Heart right ventricle (tissue), 16 donors: ENCODE measurements at regions of chr14 and their contacts with region 1.

Region 1: GRCh38 chr14:88380405-88380804 is 5.1 kb upstream of the SPATA7 start:
- DNase-seq: no peak
- ATAC-seq: no peak
- H3K4me3 ChIP-seq: no peak overlapping the region
- H3K27ac ChIP-seq: no peak overlapping the region
- H3K4me1 ChIP-seq: peaks cover 0 to 7% (median 0%) of the 10 kb centered on the region in 9 donors
- H3K27me3 ChIP-seq: no peaks in the 10 kb centered on the region
- CTCF ChIP-seq: peak in 4 of 9 donors; percentile 14 to 48 (median 32)

Region 2: DNA sequence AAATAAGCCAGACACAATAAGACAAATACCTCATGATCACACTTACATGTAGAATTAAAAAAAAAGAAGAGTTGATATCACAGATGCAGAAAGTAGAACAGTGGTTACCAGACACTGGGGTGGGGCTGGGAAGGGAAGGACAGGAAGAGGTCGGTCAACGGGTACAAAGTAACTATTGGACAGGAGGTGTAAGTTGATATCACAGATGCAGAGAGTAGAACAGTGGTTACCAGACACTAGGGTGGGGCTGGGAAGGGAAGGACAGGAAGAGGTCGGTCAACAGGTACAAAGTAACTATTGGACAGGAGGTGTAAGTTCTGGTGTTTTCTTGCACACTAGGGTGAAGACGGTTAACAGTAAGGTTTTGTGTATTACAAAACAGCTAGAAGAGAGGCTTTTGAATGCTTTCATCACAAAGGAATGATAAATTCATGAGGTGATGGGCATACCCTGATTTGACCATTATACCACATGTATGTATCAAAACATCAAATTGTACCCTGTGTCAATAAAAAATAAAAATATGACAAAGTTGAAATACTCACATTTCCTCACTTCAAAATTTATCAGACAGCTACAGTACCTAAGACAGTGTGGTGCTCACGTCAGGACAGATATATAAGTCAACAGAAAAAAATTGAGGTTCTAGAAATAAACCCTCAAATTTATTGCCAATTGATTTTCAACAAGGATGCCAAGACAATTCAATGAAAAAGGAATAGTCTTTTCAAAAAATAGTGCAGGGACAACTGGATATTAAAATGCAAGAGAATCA is 420.2 kb before region 1 on chr14:
- intact Hi-C with region 1: no loop called
- DNase-seq: no peak
- ATAC-seq: peak in 2 of 8 donors; percentile 16 to 22
- H3K4me3 ChIP-seq: no peak overlapping the region
- H3K27ac ChIP-seq: no peak overlapping the region
- H3K4me1 ChIP-seq: peaks cover 0 to 8% (median 0%) of the 10 kb centered on the region in 9 donors
- H3K27me3 ChIP-seq: no peaks in the 10 kb centered on the region
- CTCF ChIP-seq: no peak

Region 3: DNA sequence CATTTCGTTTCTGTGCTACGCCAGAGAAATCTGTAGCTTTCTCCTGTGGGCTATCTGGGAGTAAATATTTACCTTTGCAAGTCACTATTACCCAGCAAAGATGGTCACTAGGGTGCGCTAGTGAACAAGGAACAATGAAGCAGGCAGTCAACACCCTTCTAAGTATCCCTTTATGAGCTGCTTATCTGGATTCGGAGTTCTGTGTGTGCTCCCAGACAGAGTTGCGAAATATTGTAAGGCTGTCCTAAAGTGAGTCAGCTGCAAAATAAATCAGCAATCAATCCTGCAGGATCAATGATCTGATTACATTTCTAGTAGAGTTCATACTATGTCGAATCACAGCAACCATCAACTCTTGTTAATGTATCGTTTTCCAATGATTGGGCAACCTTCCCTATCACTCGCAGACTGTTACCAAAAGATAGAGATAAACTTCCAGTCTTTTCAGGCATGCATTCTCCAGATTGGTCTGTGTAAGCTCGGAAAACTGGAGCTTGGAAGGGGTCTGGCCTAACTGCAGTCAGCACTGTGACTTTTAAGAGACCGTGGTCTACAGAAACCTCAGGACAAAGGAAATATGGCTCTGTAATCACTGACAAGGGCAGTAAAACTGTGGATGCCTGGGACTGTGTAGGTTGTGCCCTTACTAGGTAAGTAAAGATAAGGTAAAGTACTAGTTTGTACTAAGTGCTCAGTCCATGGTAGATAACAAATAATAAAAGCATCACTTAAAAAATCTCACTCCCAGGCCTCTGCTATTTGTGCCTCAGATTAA is 190.8 kb before region 1 on chr14:
- intact Hi-C with region 1: loop called in 7 of 10 experiments (anchors 5 to 10 kb)
- DNase-seq: peak in 1 of 2 donors; percentile 78
- ATAC-seq: peak; percentile 86 to 95 (median 93)
- H3K4me3 ChIP-seq: peak overlapping the region in 6 of 10 donors; percentile 19 to 38 (median 30)
- H3K27ac ChIP-seq: no peak overlapping the region
- H3K4me1 ChIP-seq: peaks cover 0 to 14% (median 3%) of the 10 kb centered on the region in 9 donors
- H3K27me3 ChIP-seq: peaks cover 0 to 34% (median 25%) of the 10 kb centered on the region in 7 donors
- CTCF ChIP-seq: peak; percentile 26 to 78 (median 71)